ENCODE measurements at regions of chr3 and their contacts with region 1.

Region 1: DNA sequence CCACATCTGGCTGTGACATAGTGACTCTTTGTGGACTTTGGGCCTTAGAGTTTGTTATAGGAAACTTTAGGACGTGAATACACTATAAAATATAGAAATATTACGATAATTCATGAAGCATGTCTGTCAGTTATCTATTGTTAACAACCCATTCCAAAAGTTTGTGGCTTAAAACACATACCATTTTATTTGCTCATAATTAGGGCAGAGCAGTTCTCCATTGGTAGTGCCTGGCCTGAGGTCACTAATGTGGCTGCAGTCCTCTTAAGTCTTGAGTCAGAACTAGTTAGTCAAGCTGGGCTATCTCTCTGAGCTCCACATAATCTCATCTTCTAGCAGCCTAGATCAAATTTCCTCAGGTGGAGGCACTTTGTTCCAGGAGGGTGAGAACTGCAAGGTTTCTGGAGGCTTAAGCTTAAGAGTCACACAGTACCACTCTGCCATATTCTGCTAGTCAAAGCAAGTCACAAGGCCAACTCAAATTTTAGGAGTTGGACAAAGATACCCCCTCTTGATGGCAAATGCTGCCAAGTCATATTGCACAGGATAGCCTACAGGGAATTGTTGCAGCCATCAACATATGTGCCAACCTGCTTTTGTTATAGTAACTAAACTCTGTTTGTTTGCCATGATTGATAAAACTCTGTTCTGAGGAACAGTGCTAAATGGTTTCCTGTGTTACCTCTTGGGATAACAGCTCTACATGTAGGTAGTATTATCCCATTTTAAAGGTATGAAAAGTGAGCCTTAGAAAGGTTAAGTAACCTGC is 8.7 kb downstream of the ATXN7 start:
- DNase-seq: peak; percentile 92
- ATAC-seq: peak; percentile 93
- H3K4me3 ChIP-seq: no peak overlapping the region
- H3K27ac ChIP-seq: no peak overlapping the region
- H3K4me1 ChIP-seq: peaks cover 4% of the 10 kb centered on the region
- H3K27me3 ChIP-seq: no peaks in the 10 kb centered on the region
- CTCF ChIP-seq: no peak
- POLR2A ChIP-seq: no peak
- RAD21 ChIP-seq: no peak

Region 2: DNA sequence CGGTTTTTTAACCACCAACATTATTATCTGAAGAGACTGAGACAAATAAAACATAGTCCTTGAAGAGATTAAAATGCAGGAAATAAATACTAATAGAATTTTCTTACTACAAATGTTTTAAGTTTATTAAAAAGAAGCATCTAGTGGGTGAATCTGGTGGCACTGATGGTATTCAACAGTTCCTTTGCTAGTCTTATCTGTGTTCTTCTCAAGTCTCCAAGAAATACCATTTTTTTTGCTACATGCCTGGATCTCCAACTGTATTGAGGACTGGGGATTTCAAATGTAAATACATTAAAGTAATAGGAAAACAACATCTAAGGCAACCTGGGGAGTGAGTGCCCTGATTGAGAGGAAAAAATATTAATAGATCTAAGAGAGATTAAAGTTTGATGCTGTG is 30.6 kb before region 1 on chr3:
- CTCF ChIA-PET with region 1: interaction called, 3 read pairs
- POLR2A ChIA-PET with region 1: no interaction called
- dilution Hi-C with region 1: no loop called
- in situ Hi-C with region 1: no loop called
- intact Hi-C with region 1: loop called (anchors 1 kb)
- DNase-seq: no peak
- ATAC-seq: no peak
- H3K4me3 ChIP-seq: no peak overlapping the region
- H3K27ac ChIP-seq: no peak overlapping the region
- H3K4me1 ChIP-seq: no peaks in the 10 kb centered on the region
- H3K27me3 ChIP-seq: no peaks in the 10 kb centered on the region
- CTCF ChIP-seq: no peak
- POLR2A ChIP-seq: no peak
- RAD21 ChIP-seq: no peak

Region 3: GRCh38 chr3:65466300-65466988 is 1594.1 kb after region 1 on chr3:
- CTCF ChIA-PET with region 1: no interaction called
- POLR2A ChIA-PET with region 1: no interaction called
- dilution Hi-C with region 1: no loop called
- in situ Hi-C with region 1: no loop called
- intact Hi-C with region 1: no loop called
- DNase-seq: no peak
- ATAC-seq: no peak
- H3K4me3 ChIP-seq: no peak overlapping the region
- H3K27ac ChIP-seq: no peak overlapping the region
- H3K4me1 ChIP-seq: no peaks in the 10 kb centered on the region
- H3K27me3 ChIP-seq: no peaks in the 10 kb centered on the region
- CTCF ChIP-seq: no peak
- POLR2A ChIP-seq: no peak
- RAD21 ChIP-seq: no peak